ENCODE measurements at regions of chr4 and their contacts with region 1.

Region 1: DNA sequence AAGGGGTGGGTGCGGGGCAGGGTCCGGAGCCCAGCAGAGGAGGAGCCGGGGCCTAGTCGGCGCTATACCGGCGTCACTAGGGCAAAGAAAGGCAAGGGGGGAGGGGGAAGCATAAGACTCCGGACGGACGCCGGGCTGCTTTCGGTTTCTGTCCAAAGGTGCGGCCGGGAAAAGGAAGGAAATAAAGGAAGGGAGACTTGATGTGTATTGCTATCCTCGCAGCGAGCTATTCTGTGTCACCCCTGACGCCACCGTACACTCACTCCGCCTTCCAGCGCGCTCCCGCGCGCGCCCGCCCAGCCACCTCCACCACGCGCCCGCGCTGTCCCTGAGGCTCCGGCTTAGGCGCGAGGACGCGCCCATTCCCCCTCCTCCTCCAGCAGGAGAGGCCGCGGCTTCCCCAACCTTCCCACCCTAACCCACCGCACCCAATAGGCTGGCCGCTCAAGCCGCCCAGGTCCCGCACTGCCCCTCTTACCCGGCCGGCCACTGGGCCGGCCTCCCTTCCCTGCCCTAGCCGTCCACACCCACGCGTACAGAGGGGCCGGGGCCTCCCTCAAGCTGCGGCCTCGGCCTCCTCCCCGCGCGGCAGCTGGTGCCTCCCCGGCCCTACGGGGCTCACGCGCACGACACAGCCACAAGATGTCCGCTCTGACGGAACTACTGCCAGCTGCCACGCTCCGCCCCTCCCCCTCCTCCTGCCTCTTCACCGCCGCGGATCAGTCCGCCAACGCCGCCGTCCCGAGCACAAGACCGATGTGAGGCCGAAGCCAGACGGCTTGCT is at the start of gene UBE2D3:
- DNase-seq: peak; percentile 71 to 92
- H3K4me3 ChIP-seq: peak within 1 kb of the TSS; percentile 85 to 98 (median 94)
- H3K27ac ChIP-seq: peak within 1 kb of the TSS; percentile 98
- H3K4me1 ChIP-seq: peaks cover 0 to 17% (median 9%) of the 10 kb centered on the region in 4 experiments; a peak in 5 of 7 replicates
- H3K27me3 ChIP-seq: no peaks in the 10 kb centered on the region
- CTCF ChIP-seq: no peak; a peak in 1 of 4 replicates
- EP300 ChIP-seq: peak; percentile 25 to 62; a peak in 2 of 3 replicates
- POLR2A ChIP-seq: peak; percentile 94
- RAD21 ChIP-seq: no peak; a peak in 1 of 4 replicates
- total RNA-seq, gene UBE2D3: 377 and 396 TPM in 2 replicates

Region 2: DNA sequence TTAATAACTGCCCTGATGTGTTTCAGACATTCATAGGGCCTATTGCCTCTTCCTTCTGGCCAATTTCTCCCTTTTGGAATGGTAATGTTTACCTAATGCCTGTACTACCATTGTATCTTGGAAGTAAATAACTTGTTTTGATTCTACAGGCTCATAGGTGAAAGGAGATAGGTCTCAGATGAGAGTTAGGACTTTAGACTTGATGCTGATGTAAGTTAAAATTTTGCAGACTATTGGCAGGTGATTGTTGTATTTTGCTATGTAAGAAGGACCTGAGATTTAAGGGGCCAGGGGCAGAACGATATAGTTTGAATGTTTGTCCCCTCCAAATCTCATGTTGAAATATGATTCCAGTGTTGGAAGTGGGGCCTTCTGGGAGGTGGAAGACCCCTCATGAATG is 697.3 kb before region 1 on chr4:
- CTCF ChIA-PET with region 1: no interaction called
- POLR2A ChIA-PET with region 1: no interaction called
- DNase-seq: no peak
- H3K4me3 ChIP-seq: no peak overlapping the region
- H3K27ac ChIP-seq: no peak overlapping the region
- H3K4me1 ChIP-seq: no peaks in the 10 kb centered on the region
- H3K27me3 ChIP-seq: no peaks in the 10 kb centered on the region
- CTCF ChIP-seq: no peak
- EP300 ChIP-seq: no peak
- POLR2A ChIP-seq: no peak
- RAD21 ChIP-seq: no peak

Region 3: DNA sequence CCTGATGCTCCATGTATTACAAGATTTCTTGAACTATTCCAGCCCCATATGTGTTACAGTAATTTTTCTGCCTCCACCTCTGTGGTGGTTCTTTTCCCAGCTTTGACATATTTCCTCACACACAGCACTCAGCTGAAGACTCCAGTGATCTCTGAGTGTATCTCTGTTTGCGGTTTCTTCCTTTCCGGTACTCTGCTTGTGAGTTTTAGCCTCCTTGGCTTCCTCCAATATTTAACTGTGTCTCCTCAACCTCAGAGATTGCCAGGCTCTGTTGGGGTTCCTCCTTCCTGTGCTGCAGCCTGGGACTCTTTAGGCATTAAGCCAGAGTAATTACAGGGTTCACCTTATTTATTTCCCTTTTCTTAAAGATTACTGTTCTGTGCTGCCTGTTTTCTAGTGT is 252.8 kb before region 1 on chr4:
- CTCF ChIA-PET with region 1: no interaction called
- POLR2A ChIA-PET with region 1: no interaction called
- DNase-seq: no peak
- H3K4me3 ChIP-seq: no peak overlapping the region
- H3K27ac ChIP-seq: no peak overlapping the region
- H3K4me1 ChIP-seq: no peaks in the 10 kb centered on the region; a peak in 1 of 7 replicates
- H3K27me3 ChIP-seq: no peaks in the 10 kb centered on the region; a peak in 1 of 7 replicates
- CTCF ChIP-seq: no peak
- EP300 ChIP-seq: no peak
- POLR2A ChIP-seq: no peak
- RAD21 ChIP-seq: no peak

Region 4: DNA sequence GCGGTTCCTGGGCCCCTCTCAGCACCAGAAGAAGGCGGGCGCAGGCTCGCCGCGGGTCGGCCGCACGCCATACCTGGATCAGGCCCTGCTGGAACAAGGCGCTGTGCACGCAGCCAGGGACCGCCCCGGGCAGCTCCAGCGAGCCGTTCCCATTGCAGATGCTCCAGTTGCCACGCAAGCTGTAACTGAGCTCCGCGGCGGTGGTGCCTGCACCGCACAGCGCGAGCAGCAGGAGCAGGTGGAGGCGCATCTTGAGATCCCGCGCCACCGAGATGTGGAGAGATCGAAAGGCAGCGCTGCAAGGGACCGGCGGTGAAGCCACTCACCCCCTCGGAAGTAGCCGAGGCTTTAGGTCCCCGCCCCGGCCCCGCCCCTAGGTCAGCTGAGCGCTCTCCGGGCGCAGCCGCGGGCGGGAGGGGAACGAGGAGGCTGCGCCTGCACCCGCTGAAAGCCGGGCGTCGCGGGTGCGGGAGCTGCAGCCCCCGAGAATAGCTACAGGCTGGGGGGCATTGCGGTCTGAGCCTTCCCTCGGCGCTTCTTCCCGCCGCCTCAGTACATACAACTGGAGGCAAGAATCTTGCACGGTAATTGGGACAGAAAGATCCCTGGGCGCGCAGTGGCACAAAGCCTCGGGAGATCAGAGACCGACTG is 66.3 kb before region 1 on chr4 and contains the start of gene MANBA:
- CTCF ChIA-PET with region 1: no interaction called
- POLR2A ChIA-PET with region 1: interaction called, 26 read pairs
- DNase-seq: peak; percentile 54 to 83
- H3K4me3 ChIP-seq: peak within 1 kb of the TSS; percentile 73 to 94 (median 85)
- H3K27ac ChIP-seq: peak within 1 kb of the TSS; percentile 63; the same call in 1 of the 2 replicates
- H3K4me1 ChIP-seq: peaks cover 0 to 7% (median 1%) of the 10 kb centered on the region in 4 experiments; a peak in 3 of 7 replicates
- H3K27me3 ChIP-seq: no peaks in the 10 kb centered on the region
- CTCF ChIP-seq: no peak
- EP300 ChIP-seq: no peak
- POLR2A ChIP-seq: peak; percentile 78 to 89
- RAD21 ChIP-seq: no peak; a peak in 1 of 4 replicates
- total RNA-seq, gene MANBA: 25.9 and 27.8 TPM in 2 replicates

Region 5: GRCh38 chr4:102789317-102789717 is 37.8 kb before region 1 on chr4:
- CTCF ChIA-PET with region 1: no interaction called
- POLR2A ChIA-PET with region 1: interaction called, 36 read pairs
- DNase-seq: no peak
- H3K4me3 ChIP-seq: no peak overlapping the region
- H3K27ac ChIP-seq: no peak overlapping the region
- H3K4me1 ChIP-seq: no peaks in the 10 kb centered on the region
- H3K27me3 ChIP-seq: no peaks in the 10 kb centered on the region
- CTCF ChIP-seq: no peak
- EP300 ChIP-seq: no peak
- POLR2A ChIP-seq: no peak
- RAD21 ChIP-seq: no peak

Region 6: GRCh38 chr4:102807345-102807744 is 19.7 kb before region 1 on chr4:
- CTCF ChIA-PET with region 1: interaction called, 7 read pairs
- POLR2A ChIA-PET with region 1: interaction called, 162 read pairs
- DNase-seq: no peak
- H3K4me3 ChIP-seq: no peak overlapping the region
- H3K27ac ChIP-seq: no peak overlapping the region
- H3K4me1 ChIP-seq: peaks cover 0 to 3% (median 0%) of the 10 kb centered on the region in 4 experiments; a peak in 1 of 7 replicates
- H3K27me3 ChIP-seq: no peaks in the 10 kb centered on the region
- CTCF ChIP-seq: no peak
- EP300 ChIP-seq: no peak
- POLR2A ChIP-seq: no peak
- RAD21 ChIP-seq: no peak

Region 7: DNA sequence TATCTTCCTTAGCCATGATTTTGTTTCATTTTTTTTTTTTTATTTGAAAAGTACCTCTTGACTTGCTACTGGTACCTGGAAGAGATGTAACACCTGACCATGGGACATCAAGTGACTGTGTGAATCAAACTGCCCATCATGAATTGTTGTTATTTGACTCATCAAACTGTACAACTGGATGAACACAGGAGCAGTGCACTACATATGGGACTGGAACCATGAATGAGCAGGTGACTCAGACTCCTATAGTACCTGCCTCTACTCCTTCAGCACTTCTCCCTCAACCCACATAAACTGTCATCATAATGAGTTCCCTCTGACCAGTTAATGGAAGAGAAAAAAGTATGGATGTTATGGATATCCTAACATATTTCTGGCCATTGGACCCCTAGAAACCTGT is 16.2 kb after region 1 on chr4:
- CTCF ChIA-PET with region 1: interaction called, 17 read pairs
- POLR2A ChIA-PET with region 1: interaction called, 28 read pairs
- DNase-seq: no peak
- H3K4me3 ChIP-seq: no peak overlapping the region
- H3K27ac ChIP-seq: no peak overlapping the region
- H3K4me1 ChIP-seq: peaks cover 0 to 3% (median 0%) of the 10 kb centered on the region in 4 experiments; a peak in 1 of 7 replicates
- H3K27me3 ChIP-seq: no peaks in the 10 kb centered on the region
- CTCF ChIP-seq: no peak
- EP300 ChIP-seq: no peak
- POLR2A ChIP-seq: no peak
- RAD21 ChIP-seq: no peak

Region 8: DNA sequence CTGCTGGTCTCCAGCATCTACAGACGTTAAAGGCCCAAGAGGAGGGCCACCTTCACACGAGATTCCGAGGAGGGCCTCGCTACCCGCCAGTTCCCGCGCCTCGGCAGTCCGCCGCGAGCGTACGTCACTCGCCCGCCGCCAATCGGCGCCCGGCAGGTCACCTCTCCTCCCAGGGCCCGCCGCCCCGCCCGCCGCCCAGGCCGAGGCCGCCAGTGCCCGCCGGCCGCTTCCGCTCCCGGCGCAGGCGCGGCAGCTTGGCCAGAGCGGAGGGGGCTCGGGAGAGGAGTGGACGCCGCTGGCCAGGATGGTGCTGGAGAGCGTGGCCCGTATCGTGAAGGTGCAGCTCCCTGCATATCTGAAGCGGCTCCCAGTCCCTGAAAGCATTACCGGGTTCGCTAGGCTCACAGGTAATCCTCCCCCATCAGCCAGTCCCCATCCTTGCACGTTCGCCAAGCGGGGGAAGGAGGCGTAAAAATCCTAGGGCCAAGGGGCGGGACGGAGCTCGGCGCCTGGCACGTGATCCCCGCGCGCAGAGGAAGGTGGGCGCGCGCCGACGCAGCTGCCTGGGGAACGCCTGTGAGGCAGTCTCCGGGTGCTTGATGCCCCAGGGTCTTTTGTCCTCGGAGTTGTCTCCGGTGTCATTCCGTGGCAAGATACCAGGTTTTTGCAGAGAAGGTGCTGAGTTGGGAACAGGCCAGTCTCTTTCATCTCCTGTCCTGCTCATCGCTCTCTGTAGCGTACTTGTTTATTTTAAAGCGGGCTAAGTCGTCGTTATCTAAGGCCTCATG is 41.9 kb after region 1 on chr4 and contains the start of gene CISD2:
- CTCF ChIA-PET with region 1: no interaction called
- POLR2A ChIA-PET with region 1: interaction called, 127 read pairs
- DNase-seq: peak; percentile 66 to 92
- H3K4me3 ChIP-seq: peak within 1 kb of the TSS; percentile 73 to 86 (median 78)
- H3K27ac ChIP-seq: peak within 1 kb of the TSS; percentile 98
- H3K4me1 ChIP-seq: 0 out of 7 replicates have a peak, but pooled peaks cover 0 to 2% (median 0%) of the 10 kb centered on the region in 4 experiments
- H3K27me3 ChIP-seq: no peaks in the 10 kb centered on the region
- CTCF ChIP-seq: no peak
- EP300 ChIP-seq: no peak
- POLR2A ChIP-seq: peak; percentile 97 to 99
- RAD21 ChIP-seq: no peak; a peak in 1 of 4 replicates
- total RNA-seq, gene CISD2: 47.5 and 48.3 TPM in 2 replicates

Region 9: DNA sequence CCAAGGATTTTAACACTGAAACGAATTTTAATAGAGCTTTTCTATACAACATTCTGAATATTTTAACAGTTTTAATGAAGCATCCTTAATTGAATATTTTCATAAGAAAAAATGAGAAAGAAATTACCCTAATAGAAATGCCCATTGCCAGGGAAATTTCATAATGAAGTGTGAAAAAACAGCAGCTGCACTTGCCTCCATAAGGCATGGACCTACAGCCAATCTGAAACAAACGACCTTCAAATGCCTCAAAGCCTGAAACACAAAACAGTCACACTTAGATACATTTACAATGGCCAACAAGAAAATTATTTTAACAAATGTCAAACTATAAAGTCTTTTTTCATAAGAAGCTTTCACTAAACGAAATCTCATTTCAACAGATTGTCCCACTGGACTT is 118.0 kb after region 1 on chr4:
- CTCF ChIA-PET with region 1: no interaction called
- POLR2A ChIA-PET with region 1: no interaction called
- DNase-seq: no peak
- H3K4me3 ChIP-seq: no peak overlapping the region
- H3K27ac ChIP-seq: no peak overlapping the region
- H3K4me1 ChIP-seq: no peaks in the 10 kb centered on the region
- H3K27me3 ChIP-seq: no peaks in the 10 kb centered on the region
- CTCF ChIP-seq: no peak
- EP300 ChIP-seq: no peak
- POLR2A ChIP-seq: no peak
- RAD21 ChIP-seq: no peak

Region 10: DNA sequence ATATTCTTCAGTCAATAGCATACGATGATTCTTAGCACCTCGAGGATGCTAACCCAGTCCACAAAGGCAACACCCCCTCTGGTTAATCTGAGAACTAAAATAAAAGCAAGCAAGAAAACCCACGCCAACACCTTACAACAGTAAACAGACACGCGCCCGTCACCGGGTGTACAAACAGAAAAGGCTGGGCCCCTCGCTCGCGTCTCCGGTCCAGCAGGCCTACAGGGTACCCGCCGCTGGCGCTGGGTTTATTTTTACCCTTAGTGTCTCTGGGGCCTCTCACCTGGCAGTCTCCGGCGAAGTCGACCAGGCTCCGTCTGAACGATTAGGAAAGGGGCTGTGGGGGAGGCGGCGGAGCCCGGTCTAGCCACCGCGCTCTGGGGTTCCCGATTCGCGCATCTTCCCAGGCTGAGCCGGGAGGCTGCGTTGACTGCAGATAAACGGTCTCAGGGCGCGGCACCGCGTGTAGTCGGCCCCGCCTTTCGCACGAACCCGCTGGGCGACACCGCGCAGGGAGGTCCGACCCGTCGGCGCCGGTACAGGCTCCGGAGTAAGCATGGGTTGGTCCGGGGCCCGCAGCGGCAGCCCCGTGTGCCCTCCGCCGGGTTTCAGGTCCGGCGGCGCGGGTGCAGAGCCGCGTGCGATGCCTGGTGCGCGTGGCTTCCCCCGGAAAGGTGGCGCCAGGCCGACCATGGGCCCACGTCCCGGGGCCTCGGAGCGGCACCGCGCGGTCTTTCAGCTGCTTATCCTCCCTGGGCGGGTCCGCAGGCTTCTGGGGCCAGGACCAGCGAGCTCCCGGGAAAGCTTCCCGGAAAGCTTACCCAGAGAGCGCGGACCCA is 249.0 kb after region 1 on chr4:
- CTCF ChIA-PET with region 1: no interaction called
- POLR2A ChIA-PET with region 1: interaction called, 13 read pairs
- DNase-seq: peak in 1 of 2 experiments; percentile 82
- H3K4me3 ChIP-seq: peak overlapping the region; percentile 54 to 78 (median 76)
- H3K27ac ChIP-seq: no peak overlapping the region
- H3K4me1 ChIP-seq: peaks cover 0 to 3% (median under 1%) of the 10 kb centered on the region in 4 experiments; a peak in 2 of 7 replicates
- H3K27me3 ChIP-seq: peaks cover 0 to 15% (median 13%) of the 10 kb centered on the region in 4 experiments; a peak in 4 of 7 replicates
- CTCF ChIP-seq: no peak
- EP300 ChIP-seq: no peak
- POLR2A ChIP-seq: peak; percentile 61 to 76; a peak in 2 of 3 replicates
- RAD21 ChIP-seq: no peak

Region 11: DNA sequence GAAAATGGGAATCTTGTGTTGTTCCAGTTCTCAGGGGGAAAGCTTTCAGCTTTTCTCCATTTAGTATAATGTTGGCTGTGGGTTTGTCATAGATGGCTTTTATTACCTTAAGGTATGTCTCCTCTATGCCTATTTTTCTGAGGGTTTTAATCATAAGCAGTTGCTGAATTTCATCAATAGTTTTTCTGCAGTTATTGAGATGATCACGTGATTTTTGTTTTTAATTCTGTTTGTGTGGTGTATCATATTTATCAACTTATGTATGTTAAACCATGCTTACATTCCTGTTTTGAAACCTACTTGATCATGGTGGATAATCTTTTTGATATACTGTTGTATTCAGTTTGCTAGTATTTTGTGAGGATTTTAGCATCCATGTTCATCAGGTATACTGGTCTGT is 437.8 kb after region 1 on chr4:
- CTCF ChIA-PET with region 1: no interaction called
- POLR2A ChIA-PET with region 1: no interaction called
- DNase-seq: no peak
- H3K4me3 ChIP-seq: no peak overlapping the region
- H3K27ac ChIP-seq: no peak overlapping the region
- H3K4me1 ChIP-seq: no peaks in the 10 kb centered on the region
- H3K27me3 ChIP-seq: no peaks in the 10 kb centered on the region
- CTCF ChIP-seq: no peak
- EP300 ChIP-seq: no peak
- POLR2A ChIP-seq: no peak
- RAD21 ChIP-seq: no peak

Measured in H1 (cell line).